ENCODE measurements at regions of chrX and their contacts with region 1.

Region 1: DNA sequence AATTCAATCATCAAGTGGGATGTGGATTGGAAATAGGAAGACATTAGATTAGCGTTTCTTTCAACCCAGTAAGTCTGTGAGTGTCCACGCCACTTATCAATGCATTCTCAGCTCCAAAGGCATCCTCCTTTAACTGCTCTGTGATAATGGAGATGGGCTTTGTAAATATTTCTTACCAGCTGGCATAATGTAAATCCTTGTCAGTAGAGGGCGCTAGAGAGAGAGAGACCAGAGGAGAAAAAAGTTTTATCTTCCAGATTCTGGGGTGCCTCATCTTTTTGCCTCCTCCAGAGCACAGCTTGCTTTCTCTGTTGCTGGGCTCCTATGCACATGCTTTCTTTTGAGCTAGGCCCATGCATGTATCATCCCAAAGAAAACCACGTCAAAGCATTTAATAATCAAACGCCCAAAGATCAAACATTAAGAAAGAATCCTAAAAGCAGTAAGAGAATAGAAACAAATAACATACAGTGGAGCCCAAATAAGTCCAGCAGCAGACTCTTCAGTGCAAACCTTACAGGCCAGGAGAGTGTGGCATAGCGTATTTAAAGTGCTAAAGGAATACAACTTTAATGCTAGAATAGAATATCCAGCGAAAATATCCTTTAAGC is 9.6 kb upstream of the MTMR1 start:
- DNase-seq: no peak
- ATAC-seq: no peak
- H3K4me3 ChIP-seq: no peak overlapping the region
- H3K27ac ChIP-seq: no peak overlapping the region
- H3K4me1 ChIP-seq: no peaks in the 10 kb centered on the region
- H3K27me3 ChIP-seq: no peaks in the 10 kb centered on the region

Region 2: GRCh38 chrX:150127216-150127615 is 556.4 kb before region 1 on chrX:
- intact Hi-C with region 1: loop called in 1 of 4 experiments (anchors 10 kb)
- DNase-seq: no peak
- ATAC-seq: no peak
- H3K4me3 ChIP-seq: no peak overlapping the region
- H3K27ac ChIP-seq: no peak overlapping the region
- H3K4me1 ChIP-seq: no peaks in the 10 kb centered on the region
- H3K27me3 ChIP-seq: no peaks in the 10 kb centered on the region

Region 3: DNA sequence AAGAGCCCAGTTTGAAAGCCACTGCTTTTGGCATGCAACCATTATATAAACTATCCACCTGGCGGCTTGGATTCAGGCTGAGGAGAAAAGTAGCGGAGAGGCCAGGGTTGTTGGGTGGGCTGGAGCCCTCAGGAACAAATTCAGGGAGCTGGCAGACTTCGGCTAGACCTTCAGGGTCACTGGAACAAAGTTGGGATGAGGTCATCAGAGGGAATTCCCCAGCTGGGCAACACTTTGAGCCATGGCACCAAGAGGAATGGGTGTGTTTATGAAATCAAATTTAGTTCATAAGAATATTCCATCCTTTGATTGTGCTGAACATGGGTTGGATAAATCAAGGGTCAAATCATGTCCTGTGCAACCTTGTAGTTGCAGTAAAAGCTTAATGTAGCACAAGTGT is 31.5 kb after region 1 on chrX:
- intact Hi-C with region 1: loop called in 1 of 4 experiments (anchors 5 kb)
- DNase-seq: no peak
- ATAC-seq: no peak
- H3K4me3 ChIP-seq: no peak overlapping the region
- H3K27ac ChIP-seq: no peak overlapping the region
- H3K4me1 ChIP-seq: no peaks in the 10 kb centered on the region
- H3K27me3 ChIP-seq: no peaks in the 10 kb centered on the region